ENCODE measurements at regions of chr1 and their contacts with region 1.

Region 1: DNA sequence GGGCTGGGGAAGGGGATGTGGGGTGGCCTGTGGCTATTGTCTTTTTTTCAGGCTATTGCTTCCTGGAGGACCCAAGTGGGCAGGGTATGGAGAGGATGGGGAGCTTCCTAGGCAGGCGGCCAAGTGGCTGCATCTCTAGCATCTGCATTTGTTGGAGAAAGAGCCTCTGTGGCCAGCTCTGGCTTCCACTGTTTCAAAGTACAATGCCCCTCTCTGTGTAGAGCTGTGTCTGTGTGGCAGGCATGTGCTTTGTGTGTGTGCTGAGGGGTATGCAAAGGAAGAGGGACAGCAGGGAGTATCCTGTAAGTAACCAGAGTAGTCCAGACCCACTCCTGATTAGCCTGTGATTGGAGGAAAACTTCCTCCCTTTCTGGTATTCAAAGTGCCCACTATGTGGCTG is 40.6 kb downstream of the KCNA2 start:
- DNase-seq: no peak
- H3K4me3 ChIP-seq: no peak overlapping the region
- H3K27me3 ChIP-seq: peaks cover 2% of the 10 kb centered on the region; the same call in 1 of the 2 replicates
- CTCF ChIP-seq: no peak

Region 2: GRCh38 chr1:110554871-110555801 is 10.4 kb before region 1 on chr1:
- CTCF ChIA-PET with region 1: interaction called, 11 read pairs
- POLR2A ChIA-PET with region 1: no interaction called
- DNase-seq: no peak
- H3K4me3 ChIP-seq: no peak overlapping the region
- H3K27me3 ChIP-seq: peaks cover 19% of the 10 kb centered on the region
- CTCF ChIP-seq: peak; percentile 64

Region 3: GRCh38 chr1:110581682-110582145 is 16.1 kb after region 1 on chr1:
- CTCF ChIA-PET with region 1: no interaction called
- POLR2A ChIA-PET with region 1: no interaction called
- DNase-seq: no peak
- H3K4me3 ChIP-seq: no peak overlapping the region
- H3K27me3 ChIP-seq: peaks cover 3% of the 10 kb centered on the region; the same call in 1 of the 2 replicates
- CTCF ChIP-seq: no peak

Region 4: DNA sequence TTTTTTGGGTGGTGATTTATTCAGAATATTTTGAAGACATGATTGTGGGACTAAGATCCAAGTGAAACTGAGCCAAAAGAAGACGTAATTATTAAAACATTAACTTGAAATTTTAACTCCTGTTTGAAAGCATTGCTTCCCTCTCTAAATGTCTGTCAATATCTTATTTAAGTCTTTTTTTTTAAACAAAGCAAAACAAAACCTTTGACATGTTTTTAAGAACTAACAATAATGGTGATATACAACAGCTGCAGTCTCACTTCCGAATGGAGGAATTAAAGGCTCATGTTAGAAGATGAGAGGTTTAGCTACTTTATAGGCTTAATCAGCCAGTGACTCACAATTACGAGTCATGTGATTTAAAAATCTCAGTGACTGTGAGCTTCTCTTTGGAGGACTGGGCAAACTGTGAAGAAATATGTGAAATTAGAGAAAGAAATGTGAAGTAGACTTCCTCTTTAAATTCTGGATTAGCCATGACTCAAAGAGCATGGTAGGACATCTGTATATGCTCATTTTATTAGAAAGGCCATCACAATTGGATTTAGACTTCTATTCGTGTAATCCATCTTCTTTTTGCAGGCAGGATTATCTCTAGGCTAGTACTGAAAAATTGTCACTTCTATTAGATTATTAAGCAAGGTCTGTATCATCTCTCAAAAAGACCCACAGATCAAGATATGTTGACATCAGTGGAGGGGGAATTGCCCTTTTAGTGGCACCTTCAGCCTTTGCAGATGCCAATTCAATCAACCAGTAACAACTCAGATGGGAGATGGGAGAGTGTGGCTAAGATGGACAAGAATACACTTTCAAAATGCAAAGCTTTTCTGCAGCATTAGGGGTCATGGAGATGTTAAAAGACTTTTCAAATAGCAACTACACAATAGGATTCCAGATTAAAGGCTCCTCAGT is 80.5 kb after region 1 on chr1:
- CTCF ChIA-PET with region 1: no interaction called
- POLR2A ChIA-PET with region 1: no interaction called
- DNase-seq: peak; percentile 33
- H3K4me3 ChIP-seq: no peak overlapping the region
- H3K27me3 ChIP-seq: no peaks in the 10 kb centered on the region
- CTCF ChIP-seq: no peak